Activated CD4-positive, alpha-beta T cell treated with anti-CD3 and anti-CD28 coated beads for 36 hours (primary cell): ENCODE measurements at regions of chr9 and their contacts with region 1.

Region 1: GRCh38 chr9:128067876-128068613 is at the start of gene SLC25A25:
- DNase-seq: peak; percentile 100
- ATAC-seq: peak; percentile 84
- H3K4me3 Mint-ChIP-seq: no peak within 1 kb of the TSS
- H3K27ac Mint-ChIP-seq: peak within 1 kb of the TSS; percentile 90
- H3K4me1 Mint-ChIP-seq: peaks cover 53% of the 10 kb centered on the region
- H3K27me3 Mint-ChIP-seq: no peaks in the 10 kb centered on the region
- total RNA-seq, gene SLC25A25: 6.9 to 10.8 TPM

Region 2: DNA sequence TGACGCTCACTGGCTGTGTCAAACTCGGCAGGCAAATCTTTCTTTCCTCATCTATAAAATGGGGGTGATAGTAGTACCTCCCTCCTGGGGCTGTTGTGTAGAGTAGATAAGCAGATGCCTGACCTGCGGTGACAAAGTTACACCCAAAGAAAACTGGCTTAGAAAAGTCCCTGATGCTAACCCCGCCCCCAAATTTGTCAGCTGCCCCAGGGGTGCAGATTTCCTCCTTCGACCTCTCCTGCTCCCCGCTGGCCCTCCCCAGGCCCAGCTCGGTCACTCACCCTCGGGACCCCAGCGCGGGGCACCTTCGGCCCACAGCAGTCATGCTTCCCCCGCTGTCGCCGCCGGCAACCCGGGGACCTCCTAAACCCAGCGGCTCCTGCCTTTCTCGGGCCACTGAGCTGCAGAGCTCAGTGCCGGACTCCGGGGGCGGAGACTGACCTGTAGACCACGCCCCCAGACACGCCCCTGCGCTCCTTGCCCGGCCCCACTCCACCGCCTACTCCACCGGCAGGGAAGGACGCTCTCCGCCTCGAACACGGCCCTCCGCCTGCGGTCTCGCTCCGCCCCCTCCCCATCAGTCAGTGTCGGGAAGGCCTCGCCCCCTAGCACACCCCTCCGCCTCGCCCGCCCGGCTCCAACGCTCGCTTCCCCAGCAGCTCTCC is 297.0 kb before region 1 on chr9:
- CTCF ChIA-PET with region 1: no interaction called
- POLR2A ChIA-PET with region 1: interaction called, 4 read pairs
- intact Hi-C with region 1: loop called in 1 of 2 experiments (anchors 1 kb)
- DNase-seq: peak; percentile 99
- ATAC-seq: peak; percentile 95
- H3K4me3 Mint-ChIP-seq: peak overlapping the region; percentile 80
- H3K27ac Mint-ChIP-seq: peak overlapping the region; percentile 80
- H3K4me1 Mint-ChIP-seq: peaks cover 59% of the 10 kb centered on the region
- H3K27me3 Mint-ChIP-seq: no peaks in the 10 kb centered on the region

Region 3: GRCh38 chr9:127955294-127956035 is 112.6 kb before region 1 on chr9:
- CTCF ChIA-PET with region 1: interaction called, 4 read pairs
- POLR2A ChIA-PET with region 1: no interaction called
- intact Hi-C with region 1: loop called in 1 of 2 experiments (anchors 1 kb)
- DNase-seq: peak; percentile 95
- ATAC-seq: peak; percentile 91
- H3K4me3 Mint-ChIP-seq: peak overlapping the region; percentile 51
- H3K27ac Mint-ChIP-seq: peak overlapping the region; percentile 87
- H3K4me1 Mint-ChIP-seq: peaks cover 89% of the 10 kb centered on the region
- H3K27me3 Mint-ChIP-seq: no peaks in the 10 kb centered on the region

Region 4: GRCh38 chr9:128034821-128035764 is 33.0 kb before region 1 on chr9:
- CTCF ChIA-PET with region 1: interaction called, 15 read pairs
- POLR2A ChIA-PET with region 1: interaction called, 3 read pairs
- intact Hi-C with region 1: loop called in 1 of 2 experiments (anchors 2 kb)
- DNase-seq: peak; percentile 77
- ATAC-seq: peak; percentile 59
- H3K4me3 Mint-ChIP-seq: no peak overlapping the region
- H3K27ac Mint-ChIP-seq: peak overlapping the region; percentile 59
- H3K4me1 Mint-ChIP-seq: peaks cover 40% of the 10 kb centered on the region
- H3K27me3 Mint-ChIP-seq: peaks cover 2% of the 10 kb centered on the region

Region 5: DNA sequence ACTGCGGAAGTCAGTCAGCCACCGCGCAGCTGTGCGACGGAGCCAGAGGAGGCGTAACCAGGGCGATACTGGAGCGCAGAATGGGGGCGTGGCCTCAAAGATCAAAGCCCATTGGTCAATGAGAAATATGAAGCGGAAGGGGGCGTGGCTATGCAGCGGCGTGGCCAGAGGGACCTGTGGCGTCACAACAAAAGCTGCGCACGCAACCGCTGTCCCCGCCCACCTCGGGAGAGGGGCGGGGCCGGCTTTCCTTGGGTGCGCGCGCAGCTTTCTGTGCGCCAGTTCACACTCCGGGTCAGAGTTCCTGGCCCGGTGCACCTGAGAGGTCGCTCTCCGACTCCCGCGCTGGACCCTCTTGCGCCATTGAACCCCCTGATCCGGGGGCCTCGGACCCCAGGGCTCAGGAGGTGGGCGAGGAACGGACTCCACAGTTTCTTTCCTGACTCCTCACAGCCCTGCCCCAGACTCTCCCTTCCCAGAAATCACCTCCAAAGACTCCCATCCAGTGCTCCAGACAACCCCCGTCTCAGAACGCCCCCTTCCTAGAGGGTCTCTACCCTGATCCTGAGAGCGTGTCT is 208.0 kb after region 1 on chr9 and contains the starts of genes GOLGA2 and SWI5:
- CTCF ChIA-PET with region 1: no interaction called
- POLR2A ChIA-PET with region 1: no interaction called
- intact Hi-C with region 1: loop called in 1 of 2 experiments (anchors 1 kb)
- DNase-seq: peak; percentile 100
- ATAC-seq: peak; percentile 99
- H3K4me3 Mint-ChIP-seq: peak within 1 kb of the TSS; percentile 97
- H3K27ac Mint-ChIP-seq: peak within 1 kb of the TSS; percentile 95
- H3K4me1 Mint-ChIP-seq: peaks cover 31% of the 10 kb centered on the region
- H3K27me3 Mint-ChIP-seq: no peaks in the 10 kb centered on the region
- total RNA-seq, gene GOLGA2: 28.4 to 29.4 TPM
- total RNA-seq, gene SWI5: 13.1 to 14.1 TPM

Region 6: GRCh38 chr9:129028192-129028957 is 960.3 kb after region 1 on chr9 and contains the start of gene SH3GLB2:
- CTCF ChIA-PET with region 1: no interaction called
- POLR2A ChIA-PET with region 1: no interaction called
- intact Hi-C with region 1: loop called in 1 of 2 experiments (anchors 5 kb)
- DNase-seq: peak; percentile 98
- ATAC-seq: peak; percentile 93
- H3K4me3 Mint-ChIP-seq: peak within 1 kb of the TSS; percentile 81
- H3K27ac Mint-ChIP-seq: peak within 1 kb of the TSS; percentile 52
- H3K4me1 Mint-ChIP-seq: peaks cover 17% of the 10 kb centered on the region
- H3K27me3 Mint-ChIP-seq: no peaks in the 10 kb centered on the region
- total RNA-seq, gene SH3GLB2: 49.1 to 53.7 TPM